ENCODE measurements at regions of chr16 and their contacts with region 1.

Region 1: GRCh38 chr16:17467923-17468540 is 2.7 kb downstream of the XYLT1 start:
- DNase-seq: peak; percentile 37 to 90 (median 82)
- H3K4me3 ChIP-seq: peak overlapping the region; percentile 13 to 86 (median 74)
- H3K27ac ChIP-seq: peak overlapping the region in 35 of 59 donors; percentile 2 to 89 (median 51)
- H3K27me3 ChIP-seq: peaks cover 0 to 19% (median 0%) of the 10 kb centered on the region in 45 donors
- CTCF ChIP-seq: peak; percentile 40 to 86 (median 75)

Region 2: GRCh38 chr16:16861546-16861945 is 606.5 kb before region 1 on chr16:
- intact Hi-C with region 1: loop called (anchors 5 kb)
- DNase-seq: peak in 9 of 10 donors; percentile 19 to 73 (median 54)
- H3K4me3 ChIP-seq: no peak overlapping the region
- H3K27ac ChIP-seq: no peak overlapping the region
- H3K27me3 ChIP-seq: peaks cover 0 to 5% (median 0%) of the 10 kb centered on the region in 45 donors
- CTCF ChIP-seq: peak; percentile 69 to 94 (median 84)

Region 3: DNA sequence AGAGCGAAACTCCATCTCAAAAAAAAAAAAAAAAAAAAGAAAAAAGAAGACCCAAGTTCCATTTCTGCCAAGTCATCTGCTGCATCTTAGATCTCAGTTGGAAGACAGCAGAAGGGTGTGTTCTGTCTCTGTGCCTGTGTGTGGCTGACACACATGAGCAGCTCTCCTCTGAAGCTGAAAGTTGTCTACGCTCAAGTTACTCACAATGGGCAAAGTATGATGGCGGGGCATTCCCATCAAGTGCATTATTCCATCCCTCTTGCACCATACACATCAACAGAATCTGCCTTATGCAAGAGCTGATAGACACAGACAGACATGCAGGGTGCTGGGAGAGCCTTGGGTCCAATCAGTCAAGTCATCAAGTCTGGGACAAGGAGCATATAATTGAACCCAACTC is 399.5 kb before region 1 on chr16:
- intact Hi-C with region 1: no loop called
- DNase-seq: no peak
- H3K4me3 ChIP-seq: no peak overlapping the region
- H3K27ac ChIP-seq: no peak overlapping the region
- H3K27me3 ChIP-seq: peaks cover 0 to 5% (median 0%) of the 10 kb centered on the region in 45 donors
- CTCF ChIP-seq: no peak

Region 4: GRCh38 chr16:17271687-17272086 is 196.3 kb before region 1 on chr16:
- intact Hi-C with region 1: loop called in 1 of 2 experiments (anchors 2 kb)
- DNase-seq: peak in 4 of 10 donors; percentile 18 to 53 (median 46)
- H3K4me3 ChIP-seq: no peak overlapping the region
- H3K27ac ChIP-seq: peak overlapping the region in 17 of 59 donors; percentile 4 to 59 (median 44)
- H3K27me3 ChIP-seq: no peaks in the 10 kb centered on the region
- CTCF ChIP-seq: no peak

Region 5: GRCh38 chr16:17296431-17296830 is 171.6 kb before region 1 on chr16:
- intact Hi-C with region 1: loop called in 1 of 2 experiments (anchors 10 kb)
- DNase-seq: no peak
- H3K4me3 ChIP-seq: no peak overlapping the region
- H3K27ac ChIP-seq: no peak overlapping the region
- H3K27me3 ChIP-seq: no peaks in the 10 kb centered on the region
- CTCF ChIP-seq: no peak

Region 6: GRCh38 chr16:17416461-17417311 is 51.3 kb before region 1 on chr16:
- intact Hi-C with region 1: loop called in 1 of 2 experiments (anchors 5 kb)
- DNase-seq: peak in 3 of 10 donors; percentile 20 to 45 (median 43)
- H3K4me3 ChIP-seq: peak overlapping the region in 43 of 59 donors; percentile 0 to 52 (median 29)
- H3K27ac ChIP-seq: peak overlapping the region in 37 of 59 donors; percentile 6 to 76 (median 55)
- H3K27me3 ChIP-seq: no peaks in the 10 kb centered on the region
- CTCF ChIP-seq: peak in 38 of 56 donors; percentile 11 to 64 (median 41)